Upper lobe of right lung (tissue), 1 donor: ENCODE measurements at regions of chr10 and their contacts with region 1.

Region 1: DNA sequence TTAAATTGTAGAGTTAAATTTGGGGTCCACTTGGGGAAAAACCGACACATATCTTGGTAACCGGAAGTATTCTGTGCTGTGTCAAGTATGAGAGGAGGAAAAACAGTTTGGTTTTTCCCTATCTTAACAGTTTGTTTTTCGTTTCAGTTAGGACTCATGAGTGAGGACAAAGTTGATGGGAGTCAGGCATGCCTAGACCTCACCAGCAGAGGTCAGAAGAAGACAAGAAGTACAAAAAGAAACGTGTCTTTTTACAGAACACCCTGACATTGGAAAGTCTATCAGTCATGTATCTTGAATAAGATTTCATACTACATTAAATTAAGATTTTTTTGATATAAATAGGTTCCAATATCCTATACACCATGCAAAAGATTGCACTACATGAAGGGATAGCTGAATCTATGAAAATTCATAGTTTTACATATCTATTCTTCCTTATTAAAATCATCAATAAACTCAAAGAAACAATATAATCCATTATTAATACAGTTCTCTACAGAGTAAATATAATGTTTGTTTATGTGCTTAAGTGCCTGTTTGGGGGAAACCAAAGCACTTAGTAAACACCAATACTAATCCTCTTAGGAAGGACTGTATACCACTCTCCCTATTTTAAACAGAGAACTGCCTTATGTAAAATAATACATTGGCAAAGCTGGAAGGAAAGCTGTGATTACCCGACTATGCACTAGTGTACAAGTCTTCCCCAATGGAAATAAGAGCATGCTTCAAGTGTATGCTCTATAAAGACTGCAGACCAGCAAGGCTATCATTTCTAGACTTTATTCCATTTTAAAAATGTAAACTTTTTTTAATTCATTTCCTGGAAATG is 95.6 kb downstream of the USP6NL start:
- DNase-seq: no peak
- ATAC-seq: peak; percentile 94
- H3K4me3 ChIP-seq: no peak overlapping the region
- H3K27ac ChIP-seq: no peak overlapping the region
- H3K4me1 ChIP-seq: peaks cover 4% of the 10 kb centered on the region
- H3K27me3 ChIP-seq: no peaks in the 10 kb centered on the region
- CTCF ChIP-seq: peak; percentile 88

Region 2: GRCh38 chr10:11373619-11374235 is 142.1 kb before region 1 on chr10:
- intact Hi-C with region 1: no loop called
- DNase-seq: no peak
- ATAC-seq: peak; percentile 36
- H3K4me3 ChIP-seq: no peak overlapping the region
- H3K27ac ChIP-seq: no peak overlapping the region
- H3K4me1 ChIP-seq: no peaks in the 10 kb centered on the region
- H3K27me3 ChIP-seq: no peaks in the 10 kb centered on the region
- CTCF ChIP-seq: no peak

Region 3: GRCh38 chr10:11724938-11725776 is 209.3 kb after region 1 on chr10:
- intact Hi-C with region 1: loop called (anchors 10 kb)
- DNase-seq: no peak
- ATAC-seq: peak; percentile 82
- H3K4me3 ChIP-seq: no peak overlapping the region
- H3K27ac ChIP-seq: no peak overlapping the region
- H3K4me1 ChIP-seq: no peaks in the 10 kb centered on the region
- H3K27me3 ChIP-seq: no peaks in the 10 kb centered on the region
- CTCF ChIP-seq: peak; percentile 78

Region 4: GRCh38 chr10:11757821-11758463 is 242.1 kb after region 1 on chr10:
- intact Hi-C with region 1: loop called (anchors 5 kb)
- DNase-seq: peak; percentile 91
- ATAC-seq: peak; percentile 96
- H3K4me3 ChIP-seq: no peak overlapping the region
- H3K27ac ChIP-seq: peak overlapping the region; percentile 77
- H3K4me1 ChIP-seq: peaks cover 19% of the 10 kb centered on the region
- H3K27me3 ChIP-seq: no peaks in the 10 kb centered on the region
- CTCF ChIP-seq: peak; percentile 94